CD8-positive, alpha-beta T cell (primary cell): ENCODE measurements at regions of chrX and their contacts with region 1.

Region 1: DNA sequence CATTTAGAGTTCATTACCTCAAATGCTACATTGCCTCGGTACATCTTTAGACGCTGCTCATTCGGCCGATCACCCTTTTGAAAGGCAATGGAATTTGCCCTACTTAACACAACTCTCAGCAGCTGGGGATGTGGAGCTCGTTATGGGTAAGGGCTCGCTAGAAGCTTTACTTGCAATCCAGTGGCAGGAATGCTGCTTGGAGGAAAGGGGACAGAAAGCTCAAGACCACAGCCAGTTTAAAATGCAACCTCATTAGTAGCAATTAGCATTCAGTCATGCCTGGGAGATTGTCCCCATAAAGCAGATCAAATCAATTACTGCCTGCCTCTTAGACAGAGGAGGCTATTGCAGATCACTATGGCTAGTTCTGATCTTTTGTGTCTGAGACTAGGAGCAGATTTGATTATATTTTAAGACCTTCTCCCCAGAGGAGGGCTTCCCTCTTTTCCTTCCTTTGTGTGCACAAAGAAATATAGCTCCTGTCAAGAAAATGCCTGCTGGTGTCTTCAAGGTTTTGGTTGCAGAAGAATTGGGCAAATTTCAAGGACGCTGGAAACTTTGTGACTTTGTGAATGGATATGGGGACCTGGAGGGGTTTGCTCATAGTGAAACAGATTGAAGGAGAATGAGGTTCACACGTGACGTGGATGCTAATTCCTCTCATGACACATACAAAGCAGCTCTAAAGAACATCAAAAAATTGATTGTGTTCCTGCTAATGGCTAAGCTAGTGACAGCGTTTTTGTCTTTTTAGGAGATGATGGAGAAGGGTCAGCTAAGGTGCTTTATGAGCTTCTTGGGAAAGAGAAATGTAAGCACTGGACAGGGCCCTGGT is 237.5 kb upstream of the GLRA2 start:
- DNase-seq: no peak
- ATAC-seq: no peak
- H3K4me3 ChIP-seq: no peak overlapping the region
- H3K4me3 Mint-ChIP-seq: no peak overlapping the region
- H3K27ac ChIP-seq: no peak overlapping the region
- H3K27ac Mint-ChIP-seq: no peak overlapping the region
- H3K4me1 ChIP-seq: no peaks in the 10 kb centered on the region
- H3K4me1 Mint-ChIP-seq: no peaks in the 10 kb centered on the region
- H3K27me3 ChIP-seq: no peaks in the 10 kb centered on the region
- H3K27me3 Mint-ChIP-seq: no peaks in the 10 kb centered on the region
- CTCF ChIP-seq: no peak

Region 2: GRCh38 chrX:12978205-12979010 is 1313.5 kb before region 1 on chrX:
- CTCF ChIA-PET with region 1: no interaction called
- POLR2A ChIA-PET with region 1: no interaction called
- intact Hi-C with region 1: no loop called
- DNase-seq: peak in 8 of 9 experiments; percentile 55 to 89 (median 79)
- ATAC-seq: peak; percentile 65
- H3K4me3 ChIP-seq: peak overlapping the region; percentile 77 to 95
- H3K4me3 Mint-ChIP-seq: peak overlapping the region; percentile 96
- H3K27ac ChIP-seq: peak overlapping the region; percentile 72 to 99
- H3K27ac Mint-ChIP-seq: peak overlapping the region; percentile 99
- H3K4me1 ChIP-seq: peaks cover 40% of the 10 kb centered on the region
- H3K4me1 Mint-ChIP-seq: peaks cover 41% of the 10 kb centered on the region
- H3K27me3 ChIP-seq: no peaks in the 10 kb centered on the region
- H3K27me3 Mint-ChIP-seq: no peaks in the 10 kb centered on the region
- CTCF ChIP-seq: no peak

Region 3: DNA sequence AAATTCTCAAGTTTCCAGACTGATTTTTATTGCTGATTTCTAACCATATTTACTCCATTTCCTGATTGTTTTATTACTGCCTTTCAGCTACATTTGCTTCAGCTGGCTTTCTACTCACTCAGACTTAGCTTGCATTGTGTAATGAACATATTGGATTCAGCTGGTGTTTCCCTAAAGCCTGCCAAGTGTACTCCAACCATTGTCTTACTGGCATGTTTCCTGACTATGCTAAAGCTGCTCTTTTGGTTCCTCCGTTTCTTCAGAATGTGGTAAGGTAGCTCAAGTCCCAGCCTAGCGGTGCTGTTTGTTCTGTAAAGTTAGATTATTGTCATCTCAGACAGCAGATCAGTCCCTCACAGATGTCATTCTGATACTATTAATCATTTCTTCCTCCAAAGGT is 184.3 kb after region 1 on chrX:
- CTCF ChIA-PET with region 1: no interaction called
- POLR2A ChIA-PET with region 1: no interaction called
- intact Hi-C with region 1: loop called in 1 of 2 experiments (anchors 5 kb)
- DNase-seq: no peak
- ATAC-seq: no peak
- H3K4me3 ChIP-seq: no peak overlapping the region
- H3K4me3 Mint-ChIP-seq: no peak overlapping the region
- H3K27ac ChIP-seq: no peak overlapping the region
- H3K27ac Mint-ChIP-seq: no peak overlapping the region
- H3K4me1 ChIP-seq: no peaks in the 10 kb centered on the region
- H3K4me1 Mint-ChIP-seq: no peaks in the 10 kb centered on the region
- H3K27me3 ChIP-seq: no peaks in the 10 kb centered on the region
- H3K27me3 Mint-ChIP-seq: peaks cover 2% of the 10 kb centered on the region
- CTCF ChIP-seq: no peak